GM13977 (cell line): ENCODE measurements at regions of chr12 and their contacts with region 1.

Region 1: GRCh38 chr12:94262228-94263010 is 114.0 kb downstream of the PLXNC1 start:
- DNase-seq: peak; percentile 48
- CTCF ChIP-seq: no peak

Region 2: GRCh38 chr12:93476555-93476954 is 785.9 kb before region 1 on chr12:
- in situ Hi-C with region 1: no loop called
- DNase-seq: no peak
- CTCF ChIP-seq: no peak

Region 3: DNA sequence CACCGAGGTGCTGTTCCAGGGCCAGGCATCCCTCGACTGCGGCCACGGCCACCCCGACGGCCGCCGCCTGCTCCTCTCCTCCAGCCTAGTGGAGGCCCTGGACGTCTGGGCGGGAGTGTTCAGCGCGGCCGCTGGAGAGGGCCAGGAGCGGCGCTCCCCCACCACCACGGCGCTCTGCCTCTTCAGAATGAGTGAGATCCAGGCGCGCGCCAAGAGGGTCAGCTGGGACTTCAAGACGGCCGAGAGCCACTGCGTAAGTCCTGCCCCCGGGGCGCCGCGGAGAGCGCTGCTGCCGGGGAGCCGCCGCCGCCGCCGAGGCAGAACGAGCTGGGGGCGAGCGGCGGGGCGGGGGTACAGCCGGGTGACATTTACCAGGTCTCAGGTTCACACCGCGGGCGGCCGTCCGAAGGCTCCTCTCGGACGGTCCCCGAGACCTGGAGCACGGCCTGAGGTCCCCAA is 112.6 kb before region 1 on chr12:
- in situ Hi-C with region 1: loop called (anchors 10 kb)
- DNase-seq: peak; percentile 71
- CTCF ChIP-seq: no peak

Region 4: GRCh38 chr12:95516757-95517156 is 1254.3 kb after region 1 on chr12:
- in situ Hi-C with region 1: no loop called
- DNase-seq: no peak
- CTCF ChIP-seq: no peak